Activated CD4-positive, alpha-beta memory T cell treated with anti-CD3 and anti-CD28 coated beads for 36 hours (primary cell): ENCODE measurements at regions of chr3 and their contacts with region 1.

Region 1: GRCh38 chr3:111967651-111968274 is 11.1 kb upstream of the ABHD10 start:
- DNase-seq: peak; percentile 87
- H3K4me3 Mint-ChIP-seq: no peak overlapping the region
- H3K27ac Mint-ChIP-seq: no peak overlapping the region
- H3K4me1 Mint-ChIP-seq: peaks cover 21% of the 10 kb centered on the region
- H3K27me3 Mint-ChIP-seq: no peaks in the 10 kb centered on the region

Region 2: DNA sequence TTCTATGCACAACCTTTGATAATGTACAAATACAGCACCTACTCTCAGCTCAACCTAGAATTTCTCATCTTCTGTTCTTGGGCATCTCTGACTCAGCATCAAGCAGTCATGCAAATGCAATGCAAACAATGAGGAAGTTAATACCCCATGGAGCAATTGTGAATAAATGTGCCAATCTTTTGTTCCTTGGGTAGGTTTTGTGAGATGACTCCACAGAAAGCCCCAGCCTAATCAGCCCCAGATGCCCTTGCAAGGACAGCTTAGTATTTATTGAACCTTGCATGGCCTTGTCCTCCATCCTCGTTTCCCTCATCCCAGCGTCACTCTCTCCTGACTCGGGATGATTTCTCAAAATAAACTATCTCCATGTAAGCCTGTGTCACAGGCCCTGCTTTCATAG is 1390.8 kb before region 1 on chr3:
- CTCF ChIA-PET with region 1: no interaction called
- POLR2A ChIA-PET with region 1: no interaction called
- intact Hi-C with region 1: no loop called
- DNase-seq: no peak
- H3K4me3 Mint-ChIP-seq: no peak overlapping the region
- H3K27ac Mint-ChIP-seq: no peak overlapping the region
- H3K4me1 Mint-ChIP-seq: peaks cover 2% of the 10 kb centered on the region
- H3K27me3 Mint-ChIP-seq: no peaks in the 10 kb centered on the region

Region 3: GRCh38 chr3:111717601-111718000 is 250.2 kb before region 1 on chr3:
- CTCF ChIA-PET with region 1: interaction called, 278 read pairs
- POLR2A ChIA-PET with region 1: no interaction called
- intact Hi-C with region 1: loop called (anchors 1 kb)
- DNase-seq: peak; percentile 79
- H3K4me3 Mint-ChIP-seq: no peak overlapping the region
- H3K27ac Mint-ChIP-seq: no peak overlapping the region
- H3K4me1 Mint-ChIP-seq: no peaks in the 10 kb centered on the region
- H3K27me3 Mint-ChIP-seq: no peaks in the 10 kb centered on the region

Region 4: DNA sequence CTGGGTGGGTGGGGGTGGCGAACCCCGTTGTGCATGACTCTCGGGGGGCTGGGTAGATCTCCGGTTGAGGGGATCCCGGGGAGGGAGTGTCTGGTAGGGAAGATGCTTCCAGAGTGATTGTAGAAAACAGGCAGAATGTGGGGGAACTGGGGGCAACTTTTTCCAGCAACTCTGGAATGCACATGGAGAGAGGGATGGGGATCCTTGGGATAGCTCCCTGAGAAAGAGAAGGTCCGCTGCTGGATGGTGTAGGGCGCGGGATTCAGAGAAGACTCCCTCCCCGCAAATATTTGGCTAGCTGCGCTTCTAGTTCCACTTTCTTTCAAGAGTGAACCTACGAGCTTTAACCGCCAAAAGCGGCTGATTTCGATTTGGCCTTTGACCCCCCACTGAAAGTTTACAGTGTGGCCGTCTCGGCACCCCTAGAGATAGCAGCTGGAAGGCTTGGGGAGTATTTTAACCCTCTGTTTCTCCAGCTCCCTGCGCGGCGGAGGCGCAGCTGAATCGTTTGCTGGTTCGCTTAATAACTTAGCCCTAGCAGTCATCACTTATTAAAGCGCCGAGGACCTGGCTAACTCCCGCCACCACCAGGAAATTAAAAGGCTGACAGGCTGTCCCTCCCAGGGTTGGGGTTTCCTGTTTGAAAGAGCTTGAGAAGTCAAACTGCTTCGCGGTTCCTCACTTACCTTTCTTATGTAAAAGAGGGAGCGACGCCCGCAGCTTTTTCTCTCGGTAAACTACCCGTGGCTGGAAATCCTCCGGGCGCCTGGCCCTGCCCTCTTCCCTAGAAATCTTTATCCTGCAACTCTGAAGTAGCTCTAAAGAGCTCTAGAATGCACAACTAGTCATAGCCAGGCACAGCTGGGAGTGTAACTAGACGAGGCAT is 107.5 kb before region 1 on chr3:
- CTCF ChIA-PET with region 1: interaction called, 17 read pairs
- POLR2A ChIA-PET with region 1: no interaction called
- intact Hi-C with region 1: loop called (anchors 5 kb)
- DNase-seq: peak; percentile 71
- H3K4me3 Mint-ChIP-seq: peak overlapping the region; percentile 79
- H3K27ac Mint-ChIP-seq: no peak overlapping the region
- H3K4me1 Mint-ChIP-seq: peaks cover 13% of the 10 kb centered on the region
- H3K27me3 Mint-ChIP-seq: peaks cover 7% of the 10 kb centered on the region

Region 5: DNA sequence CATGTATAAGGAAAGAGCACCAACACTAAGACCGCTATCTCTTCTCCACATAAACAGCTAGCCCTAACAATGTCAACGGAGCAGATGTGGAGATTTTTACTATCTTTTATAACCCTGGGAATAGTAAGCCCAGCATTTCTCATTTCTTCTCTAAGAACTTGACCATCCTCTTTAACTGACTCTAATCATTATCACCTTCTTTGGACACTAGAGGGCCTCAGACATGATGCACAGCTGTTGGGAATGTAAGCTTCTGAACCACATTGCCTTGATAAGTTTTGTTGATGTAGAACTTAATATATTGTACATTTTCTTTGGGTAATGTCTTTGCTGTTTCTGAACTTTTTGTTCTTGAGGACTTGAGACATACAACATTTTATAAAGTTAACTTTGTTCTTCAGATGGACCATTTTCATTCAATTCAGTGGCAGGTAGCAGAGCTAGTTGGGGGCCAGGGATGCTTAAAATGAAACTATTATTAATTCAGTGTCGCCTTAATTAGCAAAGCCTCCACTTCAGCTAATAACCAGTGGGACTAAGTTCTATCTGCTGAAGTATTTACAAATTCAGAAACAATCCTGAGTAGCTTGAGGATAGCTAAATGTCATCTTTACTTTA is 21.4 kb after region 1 on chr3:
- CTCF ChIA-PET with region 1: interaction called, 11 read pairs
- POLR2A ChIA-PET with region 1: no interaction called
- intact Hi-C with region 1: no loop called
- DNase-seq: no peak
- H3K4me3 Mint-ChIP-seq: no peak overlapping the region
- H3K27ac Mint-ChIP-seq: no peak overlapping the region
- H3K4me1 Mint-ChIP-seq: peaks cover 27% of the 10 kb centered on the region
- H3K27me3 Mint-ChIP-seq: no peaks in the 10 kb centered on the region